Right cardiac atrium (tissue), 5 donors: ENCODE measurements at regions of chr14 and their contacts with region 1.

Region 1: DNA sequence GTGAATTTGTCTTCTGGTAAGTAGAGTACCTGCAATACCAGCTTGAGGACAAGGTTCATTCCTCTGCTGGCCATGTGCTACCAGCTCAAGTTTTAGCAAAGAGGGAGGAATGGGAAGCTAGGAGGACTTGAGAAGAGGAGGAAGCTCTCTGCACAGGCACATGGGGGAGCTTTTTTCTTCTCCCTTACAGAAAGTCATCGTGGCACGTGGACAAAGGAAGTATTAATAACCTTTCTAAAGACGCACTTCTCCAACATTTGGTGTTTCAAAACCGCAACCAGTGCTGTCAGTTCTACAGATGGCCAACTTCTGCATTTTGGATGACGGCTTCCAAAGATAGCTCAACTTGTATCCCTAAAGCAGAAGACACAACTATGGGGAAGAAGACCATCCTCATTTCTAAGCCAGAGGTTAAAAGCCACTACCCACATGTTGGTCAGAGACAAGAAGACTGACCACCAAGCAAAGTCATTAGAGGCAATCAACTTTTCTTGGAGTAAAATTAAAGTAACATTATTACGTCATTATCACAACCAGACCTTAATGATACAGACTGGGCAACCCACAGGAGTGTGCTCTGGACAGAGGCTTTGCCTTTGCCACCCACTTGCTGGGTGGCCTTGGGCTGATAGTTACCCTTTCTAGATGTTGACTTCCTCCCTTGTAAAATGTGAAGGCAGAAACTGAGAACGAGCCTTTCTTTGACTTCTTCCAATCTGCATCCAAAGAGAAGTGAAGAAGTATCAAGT is 12.3 kb upstream of the TMED10 start:
- DNase-seq: no peak
- ATAC-seq: peak; percentile 52 to 57
- H3K4me3 ChIP-seq: no peak overlapping the region
- H3K27ac ChIP-seq: no peak overlapping the region
- H3K4me1 ChIP-seq: no peaks in the 10 kb centered on the region
- H3K27me3 ChIP-seq: no peaks in the 10 kb centered on the region

Region 2: DNA sequence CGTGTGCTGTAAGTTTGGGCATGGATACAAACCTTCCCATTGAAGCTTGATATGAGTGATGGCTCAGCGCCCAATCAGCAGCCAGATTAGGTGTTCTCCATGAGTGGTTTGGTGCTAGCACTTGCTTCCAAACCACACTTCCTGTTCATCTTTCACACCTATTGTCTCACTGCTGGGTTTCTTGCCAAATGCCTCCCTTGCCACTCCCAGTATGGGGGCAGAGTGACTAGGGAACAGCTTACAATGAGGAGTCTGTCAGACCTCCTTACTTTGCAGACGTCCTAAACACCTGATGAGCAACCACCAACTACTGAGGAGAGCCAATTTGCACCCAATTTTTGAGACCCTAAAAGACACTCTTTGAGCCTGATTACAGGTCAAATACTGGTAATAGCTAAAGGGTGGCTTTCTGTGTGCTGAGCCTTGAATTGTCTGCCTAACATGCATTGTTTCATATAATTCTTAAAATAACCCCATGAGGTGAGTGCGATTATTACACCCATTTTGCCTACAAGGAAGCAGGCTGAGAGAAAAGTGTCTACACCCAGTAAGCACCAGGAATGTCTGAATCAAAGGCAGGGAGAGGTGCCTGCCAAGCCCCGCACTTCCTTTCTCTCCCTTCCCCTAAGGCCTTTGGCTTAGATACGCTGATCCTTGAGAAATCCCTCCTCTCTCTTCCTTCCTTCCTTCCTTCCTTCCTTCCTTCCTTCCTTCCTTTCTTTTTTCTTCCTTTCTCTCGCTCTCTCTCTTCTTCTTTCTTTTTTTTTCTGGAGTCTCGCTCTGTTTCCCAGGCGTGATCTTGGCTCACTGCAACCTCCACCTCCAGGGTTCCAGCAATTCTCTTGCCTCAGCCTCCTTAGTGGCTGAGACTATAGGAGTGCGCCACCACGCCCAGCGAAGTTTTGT is 41.7 kb after region 1 on chr14:
- intact Hi-C with region 1: loop called in 1 of 4 experiments (anchors 10 kb)
- DNase-seq: peak in 2 of 3 donors; percentile 39 to 87
- ATAC-seq: peak; percentile 73 to 82
- H3K4me3 ChIP-seq: no peak overlapping the region
- H3K27ac ChIP-seq: no peak overlapping the region
- H3K4me1 ChIP-seq: no peaks in the 10 kb centered on the region
- H3K27me3 ChIP-seq: no peaks in the 10 kb centered on the region

Region 3: GRCh38 chr14:75293920-75294642 is 105.4 kb after region 1 on chr14:
- intact Hi-C with region 1: no loop called
- DNase-seq: peak; percentile 97 to 98 (median 98)
- ATAC-seq: peak; percentile 95
- H3K4me3 ChIP-seq: peak overlapping the region; percentile 43
- H3K27ac ChIP-seq: peak overlapping the region; percentile 93
- H3K4me1 ChIP-seq: peaks cover 3% of the 10 kb centered on the region
- H3K27me3 ChIP-seq: no peaks in the 10 kb centered on the region